PC-3 (cell line): ENCODE measurements at regions of chr14 and their contacts with region 1.

Region 1: GRCh38 chr14:29222671-29223268 is 456.2 kb downstream of the FOXG1 start:
- DNase-seq: peak; percentile 59
- ATAC-seq: peak; percentile 95
- H3K4me3 ChIP-seq: no peak overlapping the region
- H3K27ac ChIP-seq: no peak overlapping the region
- H3K4me1 ChIP-seq: peaks cover 1% of the 10 kb centered on the region
- H3K27me3 ChIP-seq: peaks cover 17% of the 10 kb centered on the region
- CTCF ChIP-seq: peak; percentile 88

Region 2: GRCh38 chr14:29123017-29123416 is 99.8 kb before region 1 on chr14:
- CTCF ChIA-PET with region 1: no interaction called
- POLR2A ChIA-PET with region 1: no interaction called
- intact Hi-C with region 1: no loop called
- DNase-seq: no peak
- ATAC-seq: no peak
- H3K4me3 ChIP-seq: no peak overlapping the region
- H3K27ac ChIP-seq: no peak overlapping the region
- H3K4me1 ChIP-seq: no peaks in the 10 kb centered on the region
- H3K27me3 ChIP-seq: no peaks in the 10 kb centered on the region
- CTCF ChIP-seq: no peak

Region 3: DNA sequence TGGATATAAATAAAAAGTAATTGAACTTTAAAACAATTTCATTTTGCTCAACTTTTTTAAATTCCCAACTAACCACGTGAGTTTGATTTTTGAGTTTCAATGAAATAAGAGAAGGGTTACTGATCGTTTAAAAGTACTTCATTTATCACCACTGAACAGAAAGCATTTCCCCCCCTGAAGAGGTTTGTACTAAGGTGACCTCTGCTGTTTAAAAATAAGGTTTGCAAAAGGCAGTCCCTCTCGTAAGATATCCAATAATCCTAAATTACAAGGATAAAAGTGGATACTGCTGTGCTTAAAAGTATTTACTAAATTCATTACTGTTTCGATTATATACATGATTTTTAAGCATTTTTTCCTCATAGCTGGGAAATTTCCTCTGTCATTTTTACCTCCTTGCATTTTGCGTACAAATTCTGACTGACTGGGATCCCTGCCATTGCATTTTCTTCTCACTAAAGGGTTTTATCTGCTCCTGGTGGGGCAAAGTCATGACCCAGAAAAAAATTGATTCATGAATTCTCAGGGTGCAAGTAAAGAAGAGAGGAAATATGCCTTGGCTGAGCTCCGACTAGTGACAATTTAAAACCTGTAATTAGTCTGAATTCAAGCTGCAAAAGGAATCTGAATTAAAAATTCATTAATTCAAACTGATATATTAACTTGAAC is 241.1 kb after region 1 on chr14:
- CTCF ChIA-PET with region 1: no interaction called
- POLR2A ChIA-PET with region 1: no interaction called
- intact Hi-C with region 1: loop called (anchors 5 kb)
- DNase-seq: peak; percentile 29
- ATAC-seq: peak; percentile 64
- H3K4me3 ChIP-seq: no peak overlapping the region
- H3K27ac ChIP-seq: no peak overlapping the region
- H3K4me1 ChIP-seq: peaks cover 1% of the 10 kb centered on the region
- H3K27me3 ChIP-seq: peaks cover 30% of the 10 kb centered on the region; the same call in 1 of the 2 replicates
- CTCF ChIP-seq: peak; percentile 52

Region 4: GRCh38 chr14:29518335-29518734 is 295.6 kb after region 1 on chr14:
- CTCF ChIA-PET with region 1: no interaction called
- POLR2A ChIA-PET with region 1: no interaction called
- intact Hi-C with region 1: loop called (anchors 5 kb)
- DNase-seq: peak; percentile 39
- ATAC-seq: no peak
- H3K4me3 ChIP-seq: no peak overlapping the region
- H3K27ac ChIP-seq: no peak overlapping the region
- H3K4me1 ChIP-seq: no peaks in the 10 kb centered on the region
- H3K27me3 ChIP-seq: peaks cover 21% of the 10 kb centered on the region
- CTCF ChIP-seq: peak; percentile 53